CD4-positive, alpha-beta memory T cell (primary cell): ENCODE measurements at regions of chr4 and their contacts with region 1.

Region 1: DNA sequence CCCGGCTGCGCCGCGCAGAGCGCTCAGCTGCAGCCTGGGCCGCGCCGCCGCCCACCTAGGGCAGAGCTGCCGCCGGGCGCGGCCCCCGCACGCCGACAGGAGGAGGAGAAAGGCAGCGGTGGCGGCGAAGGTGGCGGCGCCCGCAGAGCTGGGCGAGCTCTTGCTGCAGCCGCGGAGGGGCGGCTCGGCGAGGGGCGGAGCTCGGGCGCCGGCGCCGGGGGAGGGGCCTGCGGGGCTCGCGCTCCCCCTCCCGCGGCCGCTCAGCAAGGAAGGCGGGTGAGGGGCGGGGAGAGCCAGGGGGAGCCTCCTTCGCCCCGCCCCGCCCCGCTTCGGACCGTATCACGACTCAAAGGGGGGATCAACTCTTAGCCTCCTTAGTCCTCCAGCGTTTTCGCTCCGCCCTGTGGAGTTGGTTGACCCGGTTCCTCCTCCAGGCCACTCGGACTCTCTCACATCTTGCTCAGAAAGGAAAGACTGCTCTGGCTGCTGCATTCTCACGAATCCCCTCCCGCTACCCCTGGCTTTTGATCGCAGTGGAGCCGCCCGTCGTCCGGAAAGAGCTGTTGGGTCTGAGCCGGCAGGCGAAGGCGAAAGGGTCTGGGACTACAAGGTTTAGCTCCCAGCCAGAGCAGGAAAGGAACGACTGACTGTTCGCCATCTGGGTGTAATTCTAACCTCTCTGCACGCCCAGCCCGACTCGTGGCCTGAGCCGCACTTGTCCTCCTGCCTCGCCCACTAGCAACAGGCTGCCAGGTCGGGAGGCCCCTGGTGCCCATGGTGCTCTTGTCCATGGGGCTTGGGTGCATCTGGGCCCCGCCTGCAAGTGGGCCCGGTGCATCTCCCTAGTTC is at the start of gene ATP8A1:
- DNase-seq: peak; percentile 88 to 92 (median 91)
- H3K4me3 ChIP-seq: peak within 1 kb of the TSS; percentile 62 to 93
- H3K4me3 Mint-ChIP-seq: peak within 1 kb of the TSS; percentile 94 to 99 (median 97)
- H3K27ac ChIP-seq: peak within 1 kb of the TSS; percentile 81
- H3K27ac Mint-ChIP-seq: peak within 1 kb of the TSS; percentile 95 to 99 (median 98)
- H3K4me1 ChIP-seq: peaks cover 27% of the 10 kb centered on the region
- H3K4me1 Mint-ChIP-seq: peaks cover 29 to 52% (median 41%) of the 10 kb centered on the region in 4 donors
- H3K27me3 ChIP-seq: no peaks in the 10 kb centered on the region
- H3K27me3 Mint-ChIP-seq: no peaks in the 10 kb centered on the region
- total RNA-seq, gene ATP8A1: 25.8 to 33.5 TPM

Region 2: DNA sequence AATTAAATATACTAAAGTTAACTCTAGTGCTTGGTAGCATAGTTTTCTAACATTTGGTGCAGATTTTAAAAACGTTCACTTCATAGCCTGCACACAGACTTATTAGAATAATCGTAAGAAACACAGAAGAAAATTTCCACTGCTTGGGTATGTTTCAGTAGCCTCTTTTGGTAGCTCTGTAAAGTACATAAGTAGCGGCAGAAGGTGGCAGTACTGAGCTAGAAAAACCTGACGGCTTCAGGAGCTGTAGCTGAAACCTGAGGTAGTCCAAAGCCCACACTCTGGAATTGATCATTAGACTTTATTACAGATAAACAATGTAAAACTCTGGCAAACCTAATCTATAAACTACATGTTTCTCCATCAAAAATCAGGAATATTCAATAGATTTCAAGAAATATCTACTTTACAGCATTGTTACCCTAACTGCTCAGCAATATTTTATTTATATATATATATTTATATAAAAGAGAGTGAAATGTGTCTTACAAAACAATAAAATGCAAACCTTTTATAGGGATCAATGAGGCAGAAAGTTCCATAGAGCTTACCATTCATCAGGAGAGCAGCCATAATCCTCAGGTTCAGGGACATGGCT is 88.5 kb before region 1 on chr4:
- CTCF ChIA-PET with region 1: interaction called, 13 read pairs
- POLR2A ChIA-PET with region 1: interaction called, 4 read pairs
- intact Hi-C with region 1: loop called (anchors 2 kb)
- DNase-seq: peak; percentile 47 to 61 (median 57)
- H3K4me3 ChIP-seq: no peak overlapping the region
- H3K4me3 Mint-ChIP-seq: no peak overlapping the region
- H3K27ac ChIP-seq: no peak overlapping the region
- H3K27ac Mint-ChIP-seq: peak overlapping the region in 1 of 7 donors; percentile 2
- H3K4me1 ChIP-seq: no peaks in the 10 kb centered on the region
- H3K4me1 Mint-ChIP-seq: no peaks in the 10 kb centered on the region
- H3K27me3 ChIP-seq: no peaks in the 10 kb centered on the region
- H3K27me3 Mint-ChIP-seq: no peaks in the 10 kb centered on the region

Region 3: GRCh38 chr4:42633605-42634388 is 23.4 kb before region 1 on chr4:
- CTCF ChIA-PET with region 1: interaction called, 3 read pairs
- POLR2A ChIA-PET with region 1: interaction called, 11 read pairs
- intact Hi-C with region 1: loop called (anchors 2 kb)
- DNase-seq: no peak
- H3K4me3 ChIP-seq: no peak overlapping the region
- H3K4me3 Mint-ChIP-seq: no peak overlapping the region
- H3K27ac ChIP-seq: no peak overlapping the region
- H3K27ac Mint-ChIP-seq: peak overlapping the region in 2 of 7 donors; percentile 20 to 62
- H3K4me1 ChIP-seq: peaks cover 20% of the 10 kb centered on the region
- H3K4me1 Mint-ChIP-seq: peaks cover 41 to 87% (median 53%) of the 10 kb centered on the region in 4 donors
- H3K27me3 ChIP-seq: no peaks in the 10 kb centered on the region
- H3K27me3 Mint-ChIP-seq: no peaks in the 10 kb centered on the region

Region 4: GRCh38 chr4:42673082-42673425 is 15.9 kb after region 1 on chr4:
- CTCF ChIA-PET with region 1: interaction called, 15 read pairs
- POLR2A ChIA-PET with region 1: interaction called, 81 read pairs
- intact Hi-C with region 1: no loop called
- DNase-seq: no peak
- H3K4me3 ChIP-seq: no peak overlapping the region
- H3K4me3 Mint-ChIP-seq: peak overlapping the region in 4 of 8 donors; percentile 31 to 71 (median 61)
- H3K27ac ChIP-seq: no peak overlapping the region
- H3K27ac Mint-ChIP-seq: peak overlapping the region in 3 of 7 donors; percentile 78 to 96 (median 91)
- H3K4me1 ChIP-seq: peaks cover 24% of the 10 kb centered on the region
- H3K4me1 Mint-ChIP-seq: peaks cover 19 to 48% (median 31%) of the 10 kb centered on the region in 4 donors
- H3K27me3 ChIP-seq: no peaks in the 10 kb centered on the region
- H3K27me3 Mint-ChIP-seq: peaks cover 2 to 4% of the 10 kb centered on the region in 2 donors

Region 5: GRCh38 chr4:42761804-42762203 is 104.6 kb after region 1 on chr4:
- CTCF ChIA-PET with region 1: no interaction called
- POLR2A ChIA-PET with region 1: no interaction called
- intact Hi-C with region 1: no loop called
- DNase-seq: no peak
- H3K4me3 ChIP-seq: no peak overlapping the region
- H3K4me3 Mint-ChIP-seq: no peak overlapping the region
- H3K27ac ChIP-seq: no peak overlapping the region
- H3K27ac Mint-ChIP-seq: no peak overlapping the region
- H3K4me1 ChIP-seq: no peaks in the 10 kb centered on the region
- H3K4me1 Mint-ChIP-seq: no peaks in the 10 kb centered on the region
- H3K27me3 ChIP-seq: no peaks in the 10 kb centered on the region
- H3K27me3 Mint-ChIP-seq: peaks cover 0 to 5% of the 10 kb centered on the region in 2 donors